GM10248 (cell line): ENCODE measurements at regions of chr1 and their contacts with region 1.

Region 1: GRCh38 chr1:151909150-151910149 is at the start of gene THEM4:
- DNase-seq: peak; percentile 97
- CTCF ChIP-seq: peak; percentile 42

Region 2: GRCh38 chr1:151839457-151840405 is 69.7 kb before region 1 on chr1 and contains the start of gene C2CD4D:
- CTCF ChIA-PET with region 1: no interaction called
- POLR2A ChIA-PET with region 1: no interaction called
- DNase-seq: peak; percentile 84
- CTCF ChIP-seq: no peak

Region 3: GRCh38 chr1:151867785-151868411 is 41.6 kb before region 1 on chr1:
- CTCF ChIA-PET with region 1: no interaction called
- POLR2A ChIA-PET with region 1: no interaction called
- DNase-seq: no peak
- CTCF ChIP-seq: no peak

Region 4: GRCh38 chr1:151898513-151898991 is 10.9 kb before region 1 on chr1:
- CTCF ChIA-PET with region 1: interaction called, 19 read pairs
- POLR2A ChIA-PET with region 1: no interaction called
- DNase-seq: no peak
- CTCF ChIP-seq: no peak

Region 5: GRCh38 chr1:151920149-151920548 is 10.7 kb after region 1 on chr1:
- CTCF ChIA-PET with region 1: interaction called, 25 read pairs
- POLR2A ChIA-PET with region 1: no interaction called
- DNase-seq: no peak
- CTCF ChIP-seq: no peak

Region 6: GRCh38 chr1:151989211-151989862 is 79.9 kb after region 1 on chr1:
- CTCF ChIA-PET with region 1: no interaction called
- POLR2A ChIA-PET with region 1: no interaction called
- DNase-seq: no peak
- CTCF ChIP-seq: no peak

Region 7: GRCh38 chr1:152118915-152119314 is 209.5 kb after region 1 on chr1:
- CTCF ChIA-PET with region 1: no interaction called
- POLR2A ChIA-PET with region 1: no interaction called
- DNase-seq: no peak
- CTCF ChIP-seq: no peak